ENCODE measurements at regions of chr12 and their contacts with region 1.

Region 1: DNA sequence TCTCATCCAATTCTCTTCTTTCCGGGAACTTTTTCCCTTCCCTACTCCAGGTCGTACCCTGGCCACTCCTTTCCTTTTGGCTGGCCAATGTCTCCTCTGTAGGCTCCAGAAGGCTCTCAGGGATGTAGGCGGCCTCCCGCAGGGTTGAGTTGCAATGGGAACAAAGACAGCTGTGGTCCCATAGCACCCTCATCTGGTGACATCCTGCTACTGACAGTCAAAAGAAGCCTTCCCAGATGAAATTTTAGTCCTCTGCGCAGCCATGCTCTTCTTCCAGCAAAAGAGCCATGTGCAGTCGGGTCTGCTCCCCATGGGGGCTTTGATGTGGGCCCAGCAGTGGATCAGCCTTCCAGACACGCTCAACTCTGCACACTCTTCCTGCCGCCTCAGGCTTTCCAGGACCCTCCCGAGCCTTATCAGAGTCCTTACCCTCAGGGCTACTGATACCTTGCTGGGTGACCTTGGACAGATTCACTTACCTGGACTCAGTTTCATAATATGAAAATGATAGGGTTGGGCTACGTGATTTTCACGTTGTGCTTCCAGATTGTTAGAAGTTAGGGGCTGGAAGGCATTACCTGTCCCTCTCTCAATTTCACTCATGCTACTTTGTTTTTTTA is 5.5 kb upstream of the CELA1 start:
- DNase-seq: peak; percentile 59 to 90
- H3K4me3 ChIP-seq: no peak overlapping the region
- H3K27ac ChIP-seq: no peak overlapping the region
- H3K4me1 ChIP-seq: peaks cover 0 to 4% (median 1%) of the 10 kb centered on the region in 4 experiments; a peak in 1 of 7 replicates
- H3K27me3 ChIP-seq: no peaks in the 10 kb centered on the region
- CTCF ChIP-seq: peak; percentile 67 to 92 (median 79)
- EP300 ChIP-seq: no peak
- POLR2A ChIP-seq: no peak
- RAD21 ChIP-seq: peak; percentile 93 to 96

Region 2: GRCh38 chr12:51156245-51156765 is 195.7 kb before region 1 on chr12:
- CTCF ChIA-PET with region 1: no interaction called
- POLR2A ChIA-PET with region 1: no interaction called
- DNase-seq: peak in 1 of 2 experiments; percentile 8
- H3K4me3 ChIP-seq: no peak overlapping the region
- H3K27ac ChIP-seq: no peak overlapping the region
- H3K4me1 ChIP-seq: no peaks in the 10 kb centered on the region
- H3K27me3 ChIP-seq: no peaks in the 10 kb centered on the region
- CTCF ChIP-seq: no peak
- EP300 ChIP-seq: no peak
- POLR2A ChIP-seq: no peak
- RAD21 ChIP-seq: no peak

Region 3: GRCh38 chr12:51262758-51263177 is 89.3 kb before region 1 on chr12:
- CTCF ChIA-PET with region 1: interaction called, 51 read pairs
- POLR2A ChIA-PET with region 1: interaction called, 3 read pairs
- DNase-seq: peak in 1 of 2 experiments; percentile 77
- H3K4me3 ChIP-seq: no peak overlapping the region
- H3K27ac ChIP-seq: no peak overlapping the region
- H3K4me1 ChIP-seq: 0 out of 7 replicates have a peak, but pooled peaks cover 0 to 2% (median 0%) of the 10 kb centered on the region in 4 experiments
- H3K27me3 ChIP-seq: no peaks in the 10 kb centered on the region
- CTCF ChIP-seq: peak; percentile 57 to 69 (median 65)
- EP300 ChIP-seq: no peak
- POLR2A ChIP-seq: no peak
- RAD21 ChIP-seq: peak; percentile 48 to 62

Region 4: GRCh38 chr12:51270067-51270970 is 81.7 kb before region 1 on chr12 and contains the start of gene SMAGP:
- CTCF ChIA-PET with region 1: interaction called, 51 read pairs
- POLR2A ChIA-PET with region 1: interaction called, 10 read pairs
- DNase-seq: peak in 1 of 2 experiments; percentile 89
- H3K4me3 ChIP-seq: peak within 1 kb of the TSS; percentile 42 to 84 (median 62)
- H3K27ac ChIP-seq: no peak within 1 kb of the TSS; the same call in 1 of the 2 replicates
- H3K4me1 ChIP-seq: peaks cover 0 to 6% (median 2%) of the 10 kb centered on the region in 4 experiments; a peak in 5 of 7 replicates
- H3K27me3 ChIP-seq: peaks cover 0 to 11% (median 8%) of the 10 kb centered on the region in 4 experiments; a peak in 6 of 7 replicates
- CTCF ChIP-seq: no peak
- EP300 ChIP-seq: 0 out of 3 replicates have a peak, but pooled peaks of 1 of the 2 experiments have one; percentile 13
- POLR2A ChIP-seq: peak; percentile 43 to 63
- RAD21 ChIP-seq: no peak; a peak in 2 of 4 replicates
- total RNA-seq, gene SMAGP: 9.2 and 9.4 TPM in 2 replicates

Region 5: DNA sequence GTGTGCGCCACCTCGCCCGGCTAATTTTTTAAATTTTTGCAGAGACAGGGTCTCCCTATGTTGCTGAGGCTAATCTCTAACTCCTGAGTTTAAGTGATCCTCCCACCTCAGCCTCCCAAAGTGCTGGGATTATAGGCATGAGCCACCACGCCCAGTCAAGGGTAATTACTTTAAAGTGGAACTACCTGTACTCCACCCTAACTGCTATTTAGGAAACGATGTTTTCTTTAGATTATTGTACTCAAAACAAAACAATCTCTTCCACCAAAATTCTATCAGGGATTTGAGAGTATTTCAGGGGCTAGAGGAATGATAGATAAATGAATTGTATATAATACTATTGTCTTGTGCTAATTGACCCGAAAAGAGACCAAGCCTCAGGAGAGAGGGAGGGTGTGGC is 18.5 kb before region 1 on chr12:
- CTCF ChIA-PET with region 1: interaction called, 119 read pairs
- POLR2A ChIA-PET with region 1: no interaction called
- DNase-seq: no peak
- H3K4me3 ChIP-seq: no peak overlapping the region
- H3K27ac ChIP-seq: no peak overlapping the region
- H3K4me1 ChIP-seq: no peaks in the 10 kb centered on the region
- H3K27me3 ChIP-seq: no peaks in the 10 kb centered on the region
- CTCF ChIP-seq: no peak
- EP300 ChIP-seq: no peak
- POLR2A ChIP-seq: no peak
- RAD21 ChIP-seq: no peak